H1 (cell line): ENCODE measurements at regions of chr7 and their contacts with region 1.

Region 1: GRCh38 chr7:149125863-149126661 is at the start of gene ZNF425:
- DNase-seq: peak; percentile 73 to 97
- H3K4me3 ChIP-seq: peak within 1 kb of the TSS; percentile 83 to 95 (median 88)
- H3K27ac ChIP-seq: peak within 1 kb of the TSS; percentile 85
- H3K4me1 ChIP-seq: peaks cover 0 to 12% (median 3%) of the 10 kb centered on the region in 4 experiments; a peak in 3 of 7 replicates
- H3K27me3 ChIP-seq: no peaks in the 10 kb centered on the region
- CTCF ChIP-seq: peak; percentile 84 to 98 (median 85)
- EP300 ChIP-seq: peak in 1 of 2 experiments; percentile 64; a peak in 2 of 3 replicates
- POLR2A ChIP-seq: peak; percentile 95
- RAD21 ChIP-seq: peak; percentile 56 to 60
- total RNA-seq, gene ZNF425: 4.0 and 6.1 TPM in 2 replicates

Region 2: DNA sequence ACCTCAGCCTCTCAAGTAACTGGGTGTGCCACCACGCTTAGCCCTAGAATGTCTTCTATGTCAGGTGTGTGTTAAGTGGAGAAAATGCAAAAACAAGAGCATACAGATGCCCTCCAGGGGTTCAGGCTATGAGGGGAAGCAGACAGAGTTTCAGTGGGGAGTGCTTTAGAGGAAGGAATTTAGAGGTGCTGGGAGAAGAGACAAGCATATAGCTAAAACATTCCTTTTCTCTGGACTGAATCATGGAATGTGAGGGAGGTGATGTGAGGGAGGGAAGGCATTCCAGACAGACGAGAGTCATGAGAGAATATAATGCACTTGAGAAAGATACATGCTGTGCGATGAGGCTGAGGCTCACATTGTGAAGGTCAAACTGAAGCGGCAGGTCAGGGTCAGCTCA is 29.0 kb before region 1 on chr7:
- CTCF ChIA-PET with region 1: interaction called, 5 read pairs
- POLR2A ChIA-PET with region 1: interaction called, 20 read pairs
- DNase-seq: no peak
- H3K4me3 ChIP-seq: no peak overlapping the region
- H3K27ac ChIP-seq: no peak overlapping the region
- H3K4me1 ChIP-seq: peaks cover 0 to 2% (median under 1%) of the 10 kb centered on the region in 4 experiments; a peak in 2 of 7 replicates
- H3K27me3 ChIP-seq: no peaks in the 10 kb centered on the region
- CTCF ChIP-seq: no peak
- EP300 ChIP-seq: no peak
- POLR2A ChIP-seq: no peak
- RAD21 ChIP-seq: no peak

Region 3: DNA sequence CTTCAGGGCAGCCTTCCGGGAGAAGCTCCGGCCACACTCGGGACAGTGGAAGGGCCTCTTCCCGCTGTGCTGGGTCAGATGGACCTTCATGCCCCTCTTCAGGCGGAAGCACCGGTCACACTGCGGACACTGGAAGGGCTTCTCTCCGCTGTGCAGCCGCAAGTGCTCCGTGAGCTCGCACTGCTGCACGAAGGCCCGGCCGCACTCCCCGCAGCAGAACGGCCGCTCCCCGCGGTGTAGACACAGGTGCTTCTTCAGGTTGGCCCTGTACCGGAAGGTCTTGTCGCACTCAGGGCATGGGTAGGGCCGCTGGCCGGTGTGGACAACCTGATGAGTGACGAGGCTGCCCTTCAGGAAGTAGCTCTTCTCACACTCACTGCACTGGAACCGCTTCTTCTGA is 21.3 kb before region 1 on chr7:
- CTCF ChIA-PET with region 1: interaction called, 23 read pairs
- POLR2A ChIA-PET with region 1: interaction called, 4 read pairs
- DNase-seq: no peak
- H3K4me3 ChIP-seq: no peak overlapping the region
- H3K27ac ChIP-seq: no peak overlapping the region
- H3K4me1 ChIP-seq: no peaks in the 10 kb centered on the region
- H3K27me3 ChIP-seq: no peaks in the 10 kb centered on the region
- CTCF ChIP-seq: no peak
- EP300 ChIP-seq: no peak
- POLR2A ChIP-seq: no peak
- RAD21 ChIP-seq: no peak

Region 4: DNA sequence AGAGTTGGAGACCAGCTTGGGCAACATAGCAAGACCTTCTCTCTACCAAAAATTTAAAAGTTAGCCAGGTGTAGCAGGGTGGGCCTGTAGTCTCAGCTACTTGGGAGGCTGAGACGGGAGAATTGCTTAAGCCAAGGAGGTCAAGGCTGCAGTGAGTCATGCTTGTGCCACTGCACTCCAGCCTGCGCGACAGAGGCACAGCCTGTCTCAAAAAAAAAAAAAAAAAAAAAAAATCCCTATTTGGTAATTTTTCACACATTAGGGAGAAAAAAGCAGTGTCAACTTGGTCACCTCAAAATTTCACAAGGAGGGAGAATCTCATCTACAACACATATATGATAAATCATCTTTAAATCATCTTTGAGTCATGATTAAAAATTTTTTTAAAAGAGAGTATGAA is 14.8 kb after region 1 on chr7:
- CTCF ChIA-PET with region 1: interaction called, 84 read pairs
- POLR2A ChIA-PET with region 1: interaction called, 142 read pairs
- DNase-seq: no peak
- H3K4me3 ChIP-seq: no peak overlapping the region
- H3K27ac ChIP-seq: no peak overlapping the region
- H3K4me1 ChIP-seq: peaks cover 3 to 13% (median 9%) of the 10 kb centered on the region in 4 experiments; a peak in 5 of 7 replicates
- H3K27me3 ChIP-seq: no peaks in the 10 kb centered on the region
- CTCF ChIP-seq: no peak
- EP300 ChIP-seq: no peak
- POLR2A ChIP-seq: no peak
- RAD21 ChIP-seq: no peak

Region 5: GRCh38 chr7:149248777-149249176 is 122.7 kb after region 1 on chr7:
- CTCF ChIA-PET with region 1: no interaction called
- POLR2A ChIA-PET with region 1: no interaction called
- DNase-seq: no peak
- H3K4me3 ChIP-seq: no peak overlapping the region
- H3K27ac ChIP-seq: no peak overlapping the region
- H3K4me1 ChIP-seq: no peaks in the 10 kb centered on the region
- H3K27me3 ChIP-seq: no peaks in the 10 kb centered on the region
- CTCF ChIP-seq: no peak
- EP300 ChIP-seq: no peak
- POLR2A ChIP-seq: no peak
- RAD21 ChIP-seq: no peak